PC-9 (cell line): ENCODE measurements at regions of chr2 and their contacts with region 1.

Region 1: DNA sequence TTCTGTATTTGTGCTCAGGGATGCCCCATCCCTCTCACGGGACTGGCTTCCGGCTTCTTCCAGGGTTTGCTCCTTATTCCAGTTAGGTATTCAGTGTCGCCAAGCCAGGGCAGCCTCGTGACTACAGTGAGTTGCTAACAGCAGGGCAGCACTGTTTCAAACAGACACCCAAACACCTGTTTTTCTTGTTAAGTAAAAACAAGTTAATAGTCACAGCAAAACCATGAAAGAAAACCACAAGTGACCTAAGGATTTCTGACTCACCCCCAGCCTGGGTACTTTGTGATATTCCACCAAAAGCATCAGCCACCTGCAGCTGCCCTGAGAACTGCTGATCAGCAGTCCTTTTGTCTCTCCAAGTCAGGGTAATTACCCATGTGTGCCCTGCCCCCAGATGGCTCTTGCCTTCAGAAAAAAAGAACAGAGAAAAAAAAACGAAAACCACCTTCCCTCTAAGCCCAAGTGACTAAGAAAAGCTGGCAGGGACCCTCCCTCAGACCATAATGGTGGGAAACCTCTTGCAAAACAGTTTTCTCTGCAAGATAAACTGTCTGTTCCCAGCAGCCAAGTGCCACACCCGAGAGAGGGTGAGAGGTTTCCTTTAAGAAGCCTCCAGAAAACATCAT is 178.2 kb downstream of the ANAPC1 start:
- DNase-seq: peak; percentile 82 to 99
- H3K4me3 ChIP-seq: peak overlapping the region; percentile 3; the same call in 1 of the 2 replicates
- H3K27ac ChIP-seq: peak overlapping the region; percentile 78
- H3K4me1 ChIP-seq: peaks cover 64% of the 10 kb centered on the region
- H3K27me3 ChIP-seq: no peaks in the 10 kb centered on the region
- CTCF ChIP-seq: no peak

Region 2: GRCh38 chr2:110748489-110748867 is 957.3 kb before region 1 on chr2:
- CTCF ChIA-PET with region 1: no interaction called
- POLR2A ChIA-PET with region 1: no interaction called
- intact Hi-C with region 1: loop called (anchors 10 kb)
- DNase-seq: peak; percentile 34 to 42
- H3K4me3 ChIP-seq: no peak overlapping the region
- H3K27ac ChIP-seq: no peak overlapping the region
- H3K4me1 ChIP-seq: peaks cover 41% of the 10 kb centered on the region
- H3K27me3 ChIP-seq: no peaks in the 10 kb centered on the region
- CTCF ChIP-seq: no peak